Tibial artery (tissue), 4 donors: ENCODE measurements at regions of chr9 and their contacts with region 1.

Region 1: DNA sequence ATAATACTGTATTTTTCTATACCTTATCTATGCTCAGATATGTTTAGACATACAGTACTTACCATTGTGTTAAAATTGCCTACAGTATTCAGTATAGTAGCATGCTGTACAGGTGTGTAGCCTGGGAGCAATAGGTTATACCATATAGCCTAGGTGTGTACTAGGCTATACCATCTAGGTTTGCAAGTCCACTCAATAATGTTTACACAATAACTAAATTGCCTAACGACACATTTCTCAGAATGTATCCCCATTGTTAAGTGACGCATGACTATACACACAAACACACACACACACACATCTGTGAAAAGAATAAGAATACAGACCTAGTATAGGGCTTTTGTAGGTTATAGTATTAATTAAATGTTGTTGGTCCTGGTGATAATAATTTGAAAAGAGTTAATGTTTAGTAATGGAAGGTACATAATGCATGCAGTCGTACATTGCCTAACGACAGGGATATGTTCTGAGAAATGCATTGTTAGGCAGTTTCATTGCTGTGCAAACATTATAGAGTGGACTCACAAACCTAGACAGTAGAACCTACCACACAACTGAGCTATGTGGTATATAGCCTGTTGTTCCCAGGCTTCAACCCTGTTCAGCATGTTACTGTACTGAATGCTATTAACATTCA is 13.6 kb downstream of the TDRD7 start:
- DNase-seq: no peak
- H3K4me3 ChIP-seq: no peak overlapping the region
- H3K27ac ChIP-seq: no peak overlapping the region
- H3K4me1 ChIP-seq: no peaks in the 10 kb centered on the region
- H3K27me3 ChIP-seq: no peaks in the 10 kb centered on the region
- CTCF ChIP-seq: no peak

Region 2: DNA sequence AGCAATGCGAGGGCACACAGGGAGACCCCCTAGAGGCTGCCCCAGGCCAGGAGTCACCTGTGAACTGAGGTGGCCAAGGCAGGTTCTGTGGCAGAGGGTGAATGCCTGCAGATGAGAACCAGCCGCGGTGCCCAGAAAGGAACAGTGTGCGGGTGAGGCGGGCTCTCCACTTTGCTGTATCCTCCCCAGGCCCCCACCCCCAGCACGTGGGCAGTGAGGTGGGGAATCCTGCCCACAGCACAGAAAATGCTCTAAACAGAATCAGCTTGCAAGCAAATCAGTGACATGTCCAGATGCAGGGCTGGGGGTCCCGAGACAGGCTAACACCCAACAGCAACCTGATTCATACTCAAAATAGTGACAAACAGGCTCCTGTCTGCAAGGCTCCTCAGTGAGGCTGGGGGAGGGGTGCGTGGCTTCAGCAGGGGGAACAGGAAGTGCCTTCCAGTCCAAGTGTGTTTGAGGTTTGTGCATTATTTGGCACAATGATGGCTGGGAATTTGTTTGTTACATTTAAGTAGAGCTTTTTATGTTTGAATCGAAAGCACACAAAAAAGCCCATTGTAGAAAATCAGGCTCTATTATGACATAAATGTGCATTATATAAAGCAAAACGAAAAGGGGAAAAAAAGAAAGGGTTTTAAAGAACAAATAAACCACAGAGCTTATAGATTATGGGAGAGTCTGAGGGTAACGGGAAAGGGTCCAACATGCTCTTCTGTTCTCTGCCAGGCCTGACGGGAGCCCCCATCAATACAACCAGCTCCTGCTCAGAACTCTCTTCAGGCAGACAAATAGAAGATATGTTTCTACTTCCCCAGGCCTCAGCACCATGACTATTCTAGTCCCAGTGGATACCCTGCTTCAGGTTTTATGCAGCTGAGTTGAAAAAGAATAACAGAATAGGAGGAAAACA is 1324.8 kb before region 1 on chr9:
- intact Hi-C with region 1: loop called (anchors 10 kb)
- DNase-seq: no peak
- H3K4me3 ChIP-seq: no peak overlapping the region
- H3K27ac ChIP-seq: no peak overlapping the region
- H3K4me1 ChIP-seq: no peaks in the 10 kb centered on the region
- H3K27me3 ChIP-seq: no peaks in the 10 kb centered on the region
- CTCF ChIP-seq: no peak